ENCODE measurements at regions of chr1 and their contacts with region 1.

Region 1: GRCh38 chr1:36397378-36398230 is at the start of gene LSM10:
- DNase-seq: peak; percentile 93
- H3K4me3 ChIP-seq: peak within 1 kb of the TSS; percentile 70 to 96 (median 80)
- H3K27ac ChIP-seq: peak within 1 kb of the TSS; percentile 74
- H3K4me1 ChIP-seq: peaks cover 3% of the 10 kb centered on the region
- H3K27me3 ChIP-seq: no peaks in the 10 kb centered on the region
- CTCF ChIP-seq: no peak
- total RNA-seq, gene LSM10: 10.8 to 34.9 TPM

Region 2: DNA sequence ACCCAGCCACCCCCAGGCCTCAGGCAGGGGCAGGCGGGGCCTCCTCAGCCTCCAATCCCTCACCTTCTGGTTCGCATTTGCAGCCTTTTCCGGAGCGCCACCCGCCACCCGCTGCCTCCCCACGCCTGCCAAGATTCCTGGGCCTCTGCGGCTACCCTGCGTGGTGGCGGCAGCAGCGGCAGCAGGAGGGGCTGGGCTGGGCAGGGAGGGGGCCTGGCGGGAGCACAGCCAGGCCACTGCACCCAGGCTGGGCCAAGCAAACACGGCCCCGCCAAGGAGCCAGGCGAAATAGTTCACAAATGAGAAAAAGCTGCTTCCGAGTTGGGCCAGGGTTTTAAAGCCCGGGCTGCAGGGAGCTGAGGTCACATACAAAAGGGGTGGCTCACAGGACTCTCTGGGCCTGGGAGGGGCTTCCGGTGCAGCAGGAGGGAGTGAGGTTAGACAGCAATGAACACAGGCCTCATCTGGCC is 282.4 kb before region 1 on chr1:
- CTCF ChIA-PET with region 1: interaction called, 14 read pairs
- dilution Hi-C with region 1: no loop called
- in situ Hi-C with region 1: no loop called
- intact Hi-C with region 1: no loop called
- DNase-seq: peak; percentile 52
- H3K4me3 ChIP-seq: peak overlapping the region in 1 of 3 experiments; percentile 6
- H3K27ac ChIP-seq: peak overlapping the region; percentile 45
- H3K4me1 ChIP-seq: peaks cover 27% of the 10 kb centered on the region
- H3K27me3 ChIP-seq: no peaks in the 10 kb centered on the region
- CTCF ChIP-seq: no peak

Region 3: DNA sequence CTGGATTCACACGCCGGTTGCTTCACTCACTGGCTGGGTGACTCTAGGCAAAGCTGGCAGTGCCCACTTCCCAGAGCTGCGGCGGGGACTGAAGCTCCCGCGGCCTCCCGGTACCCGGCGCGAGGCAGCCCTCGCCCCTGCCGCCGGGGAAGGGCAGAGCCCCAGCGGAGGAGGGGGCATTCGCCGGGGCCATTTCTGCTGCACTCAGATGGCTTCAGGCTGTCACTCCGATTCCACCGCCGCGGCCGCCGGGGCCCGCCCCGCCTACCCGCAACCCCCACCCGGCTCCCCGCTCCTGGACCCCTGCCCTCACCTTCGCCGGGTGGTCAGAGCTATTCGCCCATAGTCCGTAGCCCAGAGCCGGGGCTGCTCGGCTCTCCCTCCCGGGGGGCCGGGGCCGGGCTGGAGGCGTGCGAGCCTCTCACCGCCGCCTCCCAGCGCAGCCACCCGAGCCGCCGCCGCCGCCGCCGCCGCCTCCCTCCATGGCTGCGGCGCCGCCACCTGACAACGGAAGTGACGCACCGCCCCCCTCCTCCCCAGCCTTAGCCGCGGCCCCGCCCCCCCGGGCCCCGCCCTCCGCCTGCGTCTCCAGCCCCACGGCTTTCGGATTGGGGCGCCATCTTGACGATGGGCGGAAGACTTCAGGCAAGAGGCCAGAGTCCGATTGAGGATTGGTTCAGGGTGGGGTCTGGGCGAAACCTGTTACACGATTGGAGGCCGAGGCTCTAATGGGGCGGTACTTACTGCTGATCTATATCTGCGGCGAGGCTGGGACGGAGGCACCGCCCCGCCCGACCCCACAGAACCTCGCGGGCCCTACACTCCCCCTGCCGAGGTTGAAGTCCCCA is 12.0 kb before region 1 on chr1 and contains the start of gene STK40:
- CTCF ChIA-PET with region 1: no interaction called
- dilution Hi-C with region 1: no loop called
- in situ Hi-C with region 1: no loop called
- intact Hi-C with region 1: loop called (anchors 1 kb)
- DNase-seq: peak; percentile 99
- H3K4me3 ChIP-seq: peak within 1 kb of the TSS; percentile 66 to 79 (median 70)
- H3K27ac ChIP-seq: peak within 1 kb of the TSS; percentile 100
- H3K4me1 ChIP-seq: peaks cover 31% of the 10 kb centered on the region
- H3K27me3 ChIP-seq: no peaks in the 10 kb centered on the region
- CTCF ChIP-seq: no peak
- total RNA-seq, gene STK40: 13.2 to 21.3 TPM

Region 4: GRCh38 chr1:36463803-36464604 is 66.4 kb after region 1 on chr1 and contains the start of gene MRPS15:
- CTCF ChIA-PET with region 1: no interaction called
- dilution Hi-C with region 1: no loop called
- in situ Hi-C with region 1: no loop called
- intact Hi-C with region 1: no loop called
- DNase-seq: peak; percentile 93
- H3K4me3 ChIP-seq: peak within 1 kb of the TSS; percentile 79 to 80 (median 80)
- H3K27ac ChIP-seq: peak within 1 kb of the TSS; percentile 88
- H3K4me1 ChIP-seq: peaks cover 16% of the 10 kb centered on the region
- H3K27me3 ChIP-seq: no peaks in the 10 kb centered on the region
- CTCF ChIP-seq: peak in 1 of 2 donors; percentile 1
- total RNA-seq, gene MRPS15: 63.3 to 106 TPM